Heart right ventricle (tissue), 16 donors: ENCODE measurements at regions of chr2 and their contacts with region 1.

Region 1: GRCh38 chr2:176763851-176764404 is 448.7 kb upstream of the HNRNPA3 start:
- DNase-seq: no peak
- ATAC-seq: no peak
- H3K4me3 ChIP-seq: no peak overlapping the region
- H3K27ac ChIP-seq: no peak overlapping the region
- H3K4me1 ChIP-seq: peaks cover 0 to 7% (median 0%) of the 10 kb centered on the region in 9 donors
- H3K27me3 ChIP-seq: no peaks in the 10 kb centered on the region
- CTCF ChIP-seq: no peak

Region 2: GRCh38 chr2:175293776-175294175 is 1470.2 kb before region 1 on chr2:
- intact Hi-C with region 1: loop called in 1 of 10 experiments (anchors 10 kb)
- DNase-seq: no peak
- ATAC-seq: no peak
- H3K4me3 ChIP-seq: no peak overlapping the region
- H3K27ac ChIP-seq: no peak overlapping the region
- H3K4me1 ChIP-seq: no peaks in the 10 kb centered on the region
- H3K27me3 ChIP-seq: peaks cover 0 to 46% (median 26%) of the 10 kb centered on the region in 7 donors
- CTCF ChIP-seq: no peak